AG04449 (cell line): ENCODE measurements at regions of chr17 and their contacts with region 1.

Region 1: DNA sequence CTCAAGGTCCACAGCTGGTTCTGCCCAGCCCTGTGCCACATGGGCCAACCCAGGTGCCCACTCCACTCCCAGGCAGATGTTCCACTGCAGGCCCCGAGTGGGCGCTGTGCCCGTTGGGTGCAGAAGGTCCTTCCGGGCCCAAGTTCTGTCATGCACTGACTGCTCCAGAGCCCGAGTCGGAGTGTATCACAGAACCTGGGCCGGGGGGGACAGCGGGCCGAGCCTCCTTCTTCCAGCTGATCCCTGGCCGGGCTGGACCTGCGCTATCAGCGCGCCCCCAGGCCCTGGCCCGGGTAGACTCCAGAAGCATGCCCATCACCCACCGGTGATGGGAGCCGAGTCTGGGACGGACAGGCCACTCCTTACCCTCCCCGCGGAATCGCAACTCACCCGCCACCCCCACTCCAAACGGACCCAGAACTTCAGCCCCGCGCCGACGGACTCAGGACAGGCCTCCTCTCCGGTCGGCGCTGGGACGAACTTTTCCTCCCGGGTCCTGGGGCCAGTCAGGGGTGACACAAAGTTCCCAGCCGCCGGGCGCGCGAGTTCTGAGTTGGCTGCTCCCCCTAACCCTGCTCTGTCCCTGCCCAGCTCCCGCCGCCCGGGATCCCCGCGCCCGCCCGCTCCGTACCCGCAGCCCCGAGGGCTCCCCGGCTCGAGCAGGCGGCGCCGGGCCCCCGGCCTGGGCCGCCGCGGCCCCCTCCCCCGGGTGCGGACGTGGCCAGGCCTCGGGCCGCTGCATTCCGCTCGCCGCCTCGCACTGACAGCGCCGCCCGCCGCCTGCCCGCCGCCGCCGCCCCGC is at the start of gene COPZ2:
- DNase-seq: no peak
- H3K4me3 ChIP-seq: peak within 1 kb of the TSS; percentile 76
- CTCF ChIP-seq: peak; percentile 81

Region 2: DNA sequence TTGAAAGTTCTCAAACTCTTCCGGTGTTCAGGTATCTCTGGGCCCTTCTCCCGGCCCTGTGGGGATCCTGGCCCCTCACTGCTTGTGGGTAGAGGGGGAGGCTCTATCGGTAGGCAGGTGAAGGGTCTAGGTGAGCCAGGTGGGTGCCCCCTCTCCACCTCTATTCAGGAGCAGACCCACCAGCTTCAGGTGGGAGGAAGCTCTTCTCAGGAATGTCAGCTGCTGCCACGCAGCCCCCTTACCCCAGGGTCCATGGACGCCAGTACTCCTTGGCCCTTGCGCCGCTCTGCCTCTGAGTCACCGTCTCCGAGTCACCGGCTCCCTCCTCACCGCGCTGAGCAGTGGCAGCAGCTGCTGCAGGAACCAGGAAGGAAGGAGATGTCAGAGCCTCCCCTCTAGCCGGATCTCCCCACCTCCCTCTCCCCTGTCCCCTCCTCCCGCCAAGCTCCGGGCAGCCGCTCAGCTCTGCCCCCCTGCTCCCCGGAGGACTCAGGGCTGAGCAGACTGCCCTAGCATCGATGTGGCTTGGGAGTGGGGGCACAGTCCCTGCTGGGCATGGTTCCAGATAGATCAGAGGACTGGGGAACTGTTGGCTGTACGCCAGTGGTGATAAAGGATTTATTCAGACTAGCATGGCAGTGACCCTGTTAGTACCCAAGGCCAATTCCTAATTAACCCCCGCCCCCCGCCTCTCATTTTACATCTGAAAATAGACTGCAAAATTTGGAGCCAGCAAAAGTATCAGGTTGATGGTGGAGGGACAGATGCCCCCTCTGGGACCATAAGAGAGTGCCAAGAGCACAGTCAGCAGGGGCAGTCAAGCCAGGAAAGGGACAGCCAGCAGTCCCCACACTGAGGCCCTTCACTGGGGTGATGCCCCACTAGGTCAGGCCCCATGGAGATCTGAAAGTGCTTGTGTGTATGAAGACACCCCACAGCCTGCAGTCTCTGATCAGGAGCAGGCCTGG is 215.5 kb before region 1 on chr17 and contains the start of gene OSBPL7:
- CTCF ChIA-PET with region 1: no interaction called
- POLR2A ChIA-PET with region 1: no interaction called
- DNase-seq: peak; percentile 36
- H3K4me3 ChIP-seq: peak within 1 kb of the TSS; percentile 87
- CTCF ChIP-seq: peak; percentile 48

Region 3: GRCh38 chr17:48054238-48055185 is 17.3 kb after region 1 on chr17:
- CTCF ChIA-PET with region 1: interaction called, 14 read pairs
- POLR2A ChIA-PET with region 1: interaction called, 27 read pairs
- DNase-seq: no peak
- H3K4me3 ChIP-seq: peak overlapping the region; percentile 15
- CTCF ChIP-seq: no peak